Ascending aorta (tissue), 2 donors: ENCODE measurements at regions of chr12 and their contacts with region 1.

Region 1: GRCh38 chr12:1443421-1444141 is 150.8 kb downstream of the FBXL14 start:
- DNase-seq: no peak
- H3K4me3 ChIP-seq: peak overlapping the region; percentile 29 to 47
- H3K27ac ChIP-seq: peak overlapping the region; percentile 56 to 61
- H3K4me1 ChIP-seq: peaks cover 0 to 6% of the 10 kb centered on the region in 2 donors
- H3K27me3 ChIP-seq: no peaks in the 10 kb centered on the region
- CTCF ChIP-seq: no peak

Region 2: DNA sequence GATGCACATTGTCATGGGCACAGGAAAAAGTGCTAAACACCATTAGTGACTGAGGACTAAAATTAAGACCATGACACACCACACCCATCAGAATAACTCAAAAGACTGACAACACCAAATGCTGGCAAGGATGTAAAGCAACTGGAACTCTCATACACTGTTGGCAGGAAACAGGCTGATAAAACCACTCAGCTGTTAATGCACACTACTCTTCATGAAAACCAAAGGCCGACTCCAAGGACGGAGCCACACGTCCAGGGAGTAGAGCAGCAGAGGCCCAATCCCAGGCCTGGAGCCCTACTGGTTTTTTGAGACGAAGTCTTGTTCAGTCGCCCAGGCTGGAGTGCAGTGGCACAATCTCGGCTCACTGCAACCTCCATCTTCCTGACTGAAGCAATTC is 500.5 kb before region 1 on chr12:
- intact Hi-C with region 1: no loop called
- DNase-seq: no peak
- H3K4me3 ChIP-seq: no peak overlapping the region
- H3K27ac ChIP-seq: no peak overlapping the region
- H3K4me1 ChIP-seq: peaks cover 0 to under 1% of the 10 kb centered on the region in 2 donors
- H3K27me3 ChIP-seq: no peaks in the 10 kb centered on the region
- CTCF ChIP-seq: no peak

Region 3: GRCh38 chr12:1398673-1399072 is 44.9 kb before region 1 on chr12:
- intact Hi-C with region 1: no loop called
- DNase-seq: no peak
- H3K4me3 ChIP-seq: no peak overlapping the region
- H3K27ac ChIP-seq: no peak overlapping the region
- H3K4me1 ChIP-seq: no peaks in the 10 kb centered on the region
- H3K27me3 ChIP-seq: no peaks in the 10 kb centered on the region
- CTCF ChIP-seq: no peak

Region 4: GRCh38 chr12:1457901-1458300 is 14.3 kb after region 1 on chr12:
- intact Hi-C with region 1: loop called (anchors 2 kb)
- DNase-seq: peak; percentile 37 to 90
- H3K4me3 ChIP-seq: no peak overlapping the region
- H3K27ac ChIP-seq: peak overlapping the region; percentile 43 to 66
- H3K4me1 ChIP-seq: peaks cover 4 to 19% of the 10 kb centered on the region in 2 donors
- H3K27me3 ChIP-seq: no peaks in the 10 kb centered on the region
- CTCF ChIP-seq: no peak